MCF 10A (cell line): ENCODE measurements at regions of chr6 and their contacts with region 1.

Region 1: GRCh38 chr6:89667872-89668556 is 29.5 kb upstream of the LYRM2 start:
- DNase-seq: no peak
- H3K4me3 Mint-ChIP-seq: no peak overlapping the region
- H3K27ac Mint-ChIP-seq: no peak overlapping the region
- H3K4me1 Mint-ChIP-seq: no peaks in the 10 kb centered on the region
- H3K27me3 Mint-ChIP-seq: no peaks in the 10 kb centered on the region
- CTCF ChIP-seq: no peak

Region 2: DNA sequence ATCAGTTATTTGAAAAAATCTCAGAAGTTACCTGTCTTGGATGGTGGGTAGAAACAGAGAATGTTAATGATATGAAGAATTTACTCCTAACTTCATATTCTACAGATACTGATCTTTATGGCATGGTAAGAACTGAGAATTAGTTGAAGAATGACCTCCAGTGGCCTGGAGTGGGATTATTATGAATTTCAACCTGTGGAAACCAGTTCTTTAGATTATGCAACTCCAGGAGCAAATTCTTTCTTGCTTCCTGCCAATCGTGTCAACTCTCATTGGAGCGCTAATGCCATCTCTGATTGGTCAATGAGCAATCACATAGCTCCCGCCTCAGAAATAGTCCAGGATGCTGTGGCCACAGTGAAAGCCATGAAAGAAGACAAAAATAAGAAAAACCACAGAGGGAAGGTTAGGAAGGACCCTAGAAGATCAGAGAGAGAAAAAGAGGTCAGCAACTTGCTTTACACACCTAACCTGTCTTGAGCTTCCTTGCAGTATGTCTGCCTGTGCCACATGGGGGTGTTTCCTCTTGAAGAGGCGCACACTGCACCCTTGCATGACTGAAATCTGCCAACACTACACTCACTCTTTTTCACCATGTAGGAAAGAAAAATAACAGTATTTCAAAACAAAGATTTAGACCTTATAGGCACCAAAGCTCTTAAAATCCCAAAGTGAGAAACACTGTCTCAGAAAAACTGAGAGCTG is 69.9 kb before region 1 on chr6:
- CTCF ChIA-PET with region 1: no interaction called
- POLR2A ChIA-PET with region 1: no interaction called
- intact Hi-C with region 1: no loop called
- DNase-seq: peak; percentile 76
- H3K4me3 Mint-ChIP-seq: peak overlapping the region; percentile 58
- H3K27ac Mint-ChIP-seq: no peak overlapping the region
- H3K4me1 Mint-ChIP-seq: peaks cover 6% of the 10 kb centered on the region
- H3K27me3 Mint-ChIP-seq: peaks cover 23% of the 10 kb centered on the region
- CTCF ChIP-seq: no peak

Region 3: DNA sequence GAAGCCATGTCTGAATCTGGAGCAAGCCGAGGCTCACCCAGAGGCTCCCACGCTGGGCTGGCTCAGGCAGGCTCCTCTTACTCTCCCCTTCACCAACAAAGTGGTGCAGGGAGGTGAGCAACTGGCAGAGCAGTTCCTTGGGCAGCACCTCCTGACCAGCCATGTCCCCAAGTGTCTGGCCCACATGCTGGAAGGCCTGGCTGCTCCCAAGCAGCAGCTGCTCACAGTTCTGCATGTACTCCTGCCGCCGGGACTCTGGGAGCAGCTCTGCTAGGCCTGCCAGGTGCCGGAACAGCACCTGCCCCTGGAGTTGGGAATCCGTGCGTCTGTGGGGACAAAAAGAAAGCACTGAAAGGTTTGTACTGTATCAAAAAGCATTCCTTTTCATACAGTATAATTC is 27.7 kb after region 1 on chr6:
- CTCF ChIA-PET with region 1: interaction called, 3 read pairs
- POLR2A ChIA-PET with region 1: no interaction called
- intact Hi-C with region 1: loop called (anchors 1 kb)
- DNase-seq: no peak
- H3K4me3 Mint-ChIP-seq: no peak overlapping the region
- H3K27ac Mint-ChIP-seq: no peak overlapping the region
- H3K4me1 Mint-ChIP-seq: no peaks in the 10 kb centered on the region
- H3K27me3 Mint-ChIP-seq: no peaks in the 10 kb centered on the region
- CTCF ChIP-seq: no peak

Region 4: DNA sequence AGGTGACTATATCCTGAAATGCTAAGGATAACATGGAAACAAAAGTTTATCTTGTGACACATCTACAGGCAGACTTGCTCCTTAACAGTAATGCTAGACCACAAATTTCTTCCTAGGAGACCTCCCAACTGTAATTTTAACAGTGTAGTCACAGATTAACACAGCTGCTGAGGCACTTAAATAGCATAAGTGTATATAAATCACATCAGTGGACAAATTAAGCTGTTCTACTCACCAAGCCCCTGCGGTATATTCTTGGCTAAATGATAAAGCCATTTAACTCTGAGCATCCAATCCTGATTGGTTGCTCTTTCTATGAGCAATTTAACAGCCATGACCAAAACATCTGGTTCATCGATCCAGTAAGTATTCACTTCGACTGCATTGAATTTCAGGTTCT is 43.8 kb after region 1 on chr6:
- CTCF ChIA-PET with region 1: no interaction called
- POLR2A ChIA-PET with region 1: no interaction called
- intact Hi-C with region 1: no loop called
- DNase-seq: no peak
- H3K4me3 Mint-ChIP-seq: no peak overlapping the region
- H3K27ac Mint-ChIP-seq: no peak overlapping the region
- H3K4me1 Mint-ChIP-seq: peaks cover 6% of the 10 kb centered on the region
- H3K27me3 Mint-ChIP-seq: no peaks in the 10 kb centered on the region
- CTCF ChIP-seq: no peak